Endothelial cell of umbilical vein (primary cell): ENCODE measurements at regions of chr1 and their contacts with region 1.

Region 1: DNA sequence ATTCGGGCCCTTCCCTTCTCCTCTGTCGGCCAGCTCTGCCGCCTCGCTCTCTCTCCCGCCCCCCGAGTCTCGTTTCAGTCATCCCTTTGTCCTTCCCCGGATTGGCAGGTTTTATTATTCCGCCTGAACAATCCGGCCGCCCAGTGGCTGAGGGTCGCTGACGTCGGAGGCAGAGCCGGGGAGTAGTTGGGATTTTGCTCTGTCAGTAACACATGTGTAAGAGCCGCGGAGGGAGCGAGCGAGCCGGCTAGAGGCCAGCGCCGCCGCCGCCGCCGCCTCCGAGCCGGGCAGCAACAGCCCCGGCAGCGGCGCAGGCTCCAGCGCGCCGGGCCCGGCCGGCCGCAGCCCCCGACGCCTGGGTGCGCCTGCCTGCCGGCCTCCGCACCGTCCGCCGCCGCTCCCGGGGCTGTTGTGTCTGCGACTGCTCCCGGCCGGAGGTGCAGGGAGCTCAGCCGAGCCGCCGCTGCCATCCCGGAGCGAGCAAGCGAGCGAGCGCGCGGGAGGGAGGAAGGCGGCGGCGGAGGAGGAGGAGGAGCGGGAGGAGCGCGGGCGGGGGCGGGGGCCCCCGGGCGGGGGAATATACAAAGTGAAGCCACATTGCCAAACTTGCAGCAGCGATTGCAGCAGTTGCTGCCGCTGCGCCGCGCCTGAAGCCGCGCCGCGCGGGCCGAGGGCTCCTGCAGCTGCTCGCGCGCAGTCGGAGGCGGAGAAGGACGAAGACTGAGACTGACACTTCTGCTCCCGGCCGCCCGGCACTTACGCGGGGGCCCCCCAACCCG is at the start of gene LMO4:
- DNase-seq: peak; percentile 97
- H3K4me3 ChIP-seq: peak within 1 kb of the TSS; percentile 86 to 95 (median 89)
- H3K27ac ChIP-seq: peak within 1 kb of the TSS; percentile 58
- H3K4me1 ChIP-seq: peaks cover 12% of the 10 kb centered on the region
- H3K27me3 ChIP-seq: peaks cover 0 to 3% of the 10 kb centered on the region in 2 experiments
- CTCF ChIP-seq: no peak
- POLR2A ChIP-seq: peak; percentile 50
- total RNA-seq, gene LMO4: 22.5 and 24.8 TPM in 2 replicates

Region 2: GRCh38 chr1:87131809-87132283 is 196.6 kb before region 1 on chr1:
- CTCF ChIA-PET with region 1: interaction called, 3 read pairs
- POLR2A ChIA-PET with region 1: no interaction called
- dilution Hi-C with region 1: no loop called
- intact Hi-C with region 1: loop called (anchors 2 kb)
- DNase-seq: peak; percentile 70
- H3K4me3 ChIP-seq: peak overlapping the region in 2 of 3 experiments; percentile 16 to 37
- H3K27ac ChIP-seq: no peak overlapping the region
- H3K4me1 ChIP-seq: peaks cover 2% of the 10 kb centered on the region
- H3K27me3 ChIP-seq: peaks cover 0 to 13% of the 10 kb centered on the region in 2 experiments
- CTCF ChIP-seq: peak; percentile 94 to 96
- POLR2A ChIP-seq: no peak

Region 3: GRCh38 chr1:87151500-87152421 is 176.7 kb before region 1 on chr1:
- CTCF ChIA-PET with region 1: interaction called, 4 read pairs
- POLR2A ChIA-PET with region 1: no interaction called
- dilution Hi-C with region 1: no loop called
- intact Hi-C with region 1: loop called (anchors 5 kb)
- DNase-seq: peak; percentile 64
- H3K4me3 ChIP-seq: peak overlapping the region in 2 of 3 experiments; percentile 0 to 46
- H3K27ac ChIP-seq: no peak overlapping the region
- H3K4me1 ChIP-seq: peaks cover 19% of the 10 kb centered on the region
- H3K27me3 ChIP-seq: peaks cover 9 to 15% of the 10 kb centered on the region in 2 experiments
- CTCF ChIP-seq: peak; percentile 52 to 62
- POLR2A ChIP-seq: no peak

Region 4: GRCh38 chr1:87226341-87226760 is 102.1 kb before region 1 on chr1:
- CTCF ChIA-PET with region 1: no interaction called
- POLR2A ChIA-PET with region 1: no interaction called
- dilution Hi-C with region 1: no loop called
- intact Hi-C with region 1: loop called (anchors 1 kb)
- DNase-seq: peak; percentile 93
- H3K4me3 ChIP-seq: no peak overlapping the region
- H3K27ac ChIP-seq: peak overlapping the region; percentile 92
- H3K4me1 ChIP-seq: peaks cover 17% of the 10 kb centered on the region
- H3K27me3 ChIP-seq: no peaks in the 10 kb centered on the region
- CTCF ChIP-seq: no peak
- POLR2A ChIP-seq: no peak

Region 5: GRCh38 chr1:87410776-87411480 is 82.5 kb after region 1 on chr1:
- CTCF ChIA-PET with region 1: no interaction called
- POLR2A ChIA-PET with region 1: no interaction called
- dilution Hi-C with region 1: no loop called
- intact Hi-C with region 1: no loop called
- DNase-seq: no peak
- H3K4me3 ChIP-seq: no peak overlapping the region
- H3K27ac ChIP-seq: no peak overlapping the region
- H3K4me1 ChIP-seq: no peaks in the 10 kb centered on the region
- H3K27me3 ChIP-seq: no peaks in the 10 kb centered on the region
- CTCF ChIP-seq: no peak
- POLR2A ChIP-seq: no peak

Region 6: GRCh38 chr1:87684194-87684593 is 355.7 kb after region 1 on chr1:
- CTCF ChIA-PET with region 1: no interaction called
- POLR2A ChIA-PET with region 1: no interaction called
- dilution Hi-C with region 1: no loop called
- intact Hi-C with region 1: loop called (anchors 2 kb)
- DNase-seq: peak; percentile 55
- H3K4me3 ChIP-seq: peak overlapping the region; percentile 36 to 74 (median 42)
- H3K27ac ChIP-seq: peak overlapping the region; percentile 6
- H3K4me1 ChIP-seq: peaks cover 23% of the 10 kb centered on the region
- H3K27me3 ChIP-seq: no peaks in the 10 kb centered on the region
- CTCF ChIP-seq: no peak
- POLR2A ChIP-seq: no peak

Region 7: DNA sequence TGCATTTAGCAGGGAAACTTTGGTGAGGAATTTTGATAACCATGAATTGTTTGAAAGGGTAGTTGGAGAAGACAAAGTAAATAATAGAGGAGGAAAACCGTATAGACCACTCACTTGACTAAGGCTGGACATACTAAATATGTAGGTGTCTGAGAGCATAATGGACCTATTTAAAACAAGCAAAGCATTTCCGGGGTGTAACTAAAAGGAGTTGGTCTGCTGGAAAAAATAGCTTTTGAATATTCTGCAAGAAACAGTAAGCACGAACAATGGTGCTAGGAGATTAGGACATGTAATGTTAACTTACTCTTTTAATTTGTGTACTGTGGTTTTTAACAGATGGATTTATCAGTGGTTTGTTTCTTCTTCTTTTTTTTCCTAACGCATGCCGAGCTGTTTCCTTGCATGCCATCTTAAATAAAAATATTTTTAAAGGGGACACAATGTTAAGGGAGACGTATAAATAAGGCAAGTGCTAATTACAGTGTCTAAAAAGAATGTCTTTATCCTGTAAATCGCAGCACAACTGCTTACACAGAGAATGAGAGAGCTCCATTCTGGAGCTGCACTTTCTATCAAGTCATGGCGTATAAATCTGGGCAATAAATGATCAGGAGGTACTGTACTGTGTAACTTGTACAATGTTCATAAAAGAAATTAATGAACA is 492.3 kb after region 1 on chr1:
- CTCF ChIA-PET with region 1: no interaction called
- POLR2A ChIA-PET with region 1: no interaction called
- dilution Hi-C with region 1: no loop called
- intact Hi-C with region 1: no loop called
- DNase-seq: no peak
- H3K4me3 ChIP-seq: no peak overlapping the region
- H3K27ac ChIP-seq: no peak overlapping the region
- H3K4me1 ChIP-seq: no peaks in the 10 kb centered on the region
- H3K27me3 ChIP-seq: no peaks in the 10 kb centered on the region
- CTCF ChIP-seq: no peak
- POLR2A ChIP-seq: no peak

Region 8: DNA sequence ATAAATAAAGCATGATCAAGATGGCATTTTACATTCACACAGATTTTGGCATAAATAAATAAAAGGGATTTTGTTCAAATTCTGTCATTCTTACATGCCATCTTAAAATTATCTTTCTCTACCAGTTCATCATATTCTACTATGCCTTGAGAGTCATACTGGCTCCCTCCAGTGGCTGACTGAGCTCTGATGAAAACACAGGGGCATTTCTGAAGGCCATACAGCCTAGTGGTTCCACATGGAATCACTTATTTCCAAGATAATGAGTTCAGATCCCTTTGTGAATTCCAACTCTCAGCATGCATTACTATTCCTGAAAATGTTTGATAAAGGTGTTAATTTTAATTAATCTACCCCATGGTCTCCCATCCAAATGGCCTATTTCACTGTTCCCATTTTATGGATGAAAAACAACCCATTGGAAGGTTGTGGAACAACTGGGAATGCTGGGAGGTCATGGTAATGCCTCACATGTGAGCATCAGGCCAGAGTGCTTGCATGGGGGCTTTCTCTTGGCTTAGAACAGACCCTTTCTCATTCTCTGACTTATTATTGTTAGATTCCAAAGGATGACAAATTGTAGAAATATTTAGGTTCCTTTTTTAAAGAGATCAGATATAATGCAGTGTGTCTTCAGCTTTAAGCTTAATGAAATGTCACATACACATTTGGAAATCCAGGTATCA is 733.2 kb after region 1 on chr1:
- CTCF ChIA-PET with region 1: interaction called, 6 read pairs
- POLR2A ChIA-PET with region 1: no interaction called
- dilution Hi-C with region 1: no loop called
- intact Hi-C with region 1: loop called (anchors 5 kb)
- DNase-seq: peak; percentile 59
- H3K4me3 ChIP-seq: no peak overlapping the region
- H3K27ac ChIP-seq: no peak overlapping the region
- H3K4me1 ChIP-seq: peaks cover 6% of the 10 kb centered on the region
- H3K27me3 ChIP-seq: no peaks in the 10 kb centered on the region
- CTCF ChIP-seq: peak; percentile 65 to 67
- POLR2A ChIP-seq: no peak

Region 9: GRCh38 chr1:88327391-88328267 is 999.2 kb after region 1 on chr1:
- CTCF ChIA-PET with region 1: no interaction called
- POLR2A ChIA-PET with region 1: no interaction called
- dilution Hi-C with region 1: no loop called
- intact Hi-C with region 1: loop called (anchors 5 kb)
- DNase-seq: peak; percentile 98
- H3K4me3 ChIP-seq: peak overlapping the region in 1 of 3 experiments; percentile 18
- H3K27ac ChIP-seq: peak overlapping the region; percentile 91
- H3K4me1 ChIP-seq: peaks cover 24% of the 10 kb centered on the region
- H3K27me3 ChIP-seq: no peaks in the 10 kb centered on the region
- CTCF ChIP-seq: no peak
- POLR2A ChIP-seq: no peak